ENCODE measurements at regions of chr12 and their contacts with region 1.

Region 1: DNA sequence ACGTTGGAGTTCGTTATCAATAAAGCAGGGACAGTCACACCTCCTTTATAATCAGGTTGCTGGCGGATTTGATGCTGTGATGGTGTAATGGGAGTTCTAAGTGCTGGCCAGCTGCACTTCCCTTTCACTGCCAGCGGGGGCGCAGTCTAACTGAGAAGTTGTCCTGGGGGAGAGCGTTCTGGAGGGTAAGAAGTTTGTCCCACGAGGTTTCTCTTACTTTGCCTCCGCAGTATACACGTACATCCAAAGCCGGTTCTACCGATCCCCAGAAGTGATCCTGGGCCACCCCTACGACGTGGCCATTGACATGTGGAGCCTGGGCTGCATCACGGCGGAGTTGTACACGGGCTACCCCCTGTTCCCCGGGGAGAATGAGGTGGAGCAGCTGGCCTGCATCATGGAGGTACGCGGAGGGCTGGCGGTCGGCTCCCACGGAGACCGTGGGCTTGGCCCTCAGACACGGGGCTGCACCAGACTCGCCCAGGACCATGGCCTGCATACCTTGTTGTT is 42.7 kb downstream of the DYRK4 start:
- DNase-seq: peak; percentile 85
- ATAC-seq: peak; percentile 100
- H3K4me3 ChIP-seq: peak overlapping the region; percentile 81
- H3K27ac ChIP-seq: peak overlapping the region; percentile 65
- H3K4me1 ChIP-seq: peaks cover 3% of the 10 kb centered on the region
- H3K27me3 ChIP-seq: peaks cover 5% of the 10 kb centered on the region
- CTCF ChIP-seq: peak; percentile 88
- POLR2A ChIP-seq: no peak
- RAD21 ChIP-seq: peak; percentile 60

Region 2: GRCh38 chr12:4562034-4562657 is 42.6 kb before region 1 on chr12 and contains the start of gene DYRK4:
- CTCF ChIA-PET with region 1: no interaction called
- POLR2A ChIA-PET with region 1: no interaction called
- dilution Hi-C with region 1: no loop called
- in situ Hi-C with region 1: no loop called
- intact Hi-C with region 1: loop called (anchors 2 kb)
- DNase-seq: peak; percentile 60
- ATAC-seq: peak; percentile 99
- H3K4me3 ChIP-seq: peak within 1 kb of the TSS; percentile 41
- H3K27ac ChIP-seq: no peak within 1 kb of the TSS
- H3K4me1 ChIP-seq: no peaks in the 10 kb centered on the region
- H3K27me3 ChIP-seq: no peaks in the 10 kb centered on the region
- CTCF ChIP-seq: no peak
- POLR2A ChIP-seq: no peak
- RAD21 ChIP-seq: no peak
- total RNA-seq, gene DYRK4: 40.5 and 44.6 TPM in 2 replicates

Region 3: DNA sequence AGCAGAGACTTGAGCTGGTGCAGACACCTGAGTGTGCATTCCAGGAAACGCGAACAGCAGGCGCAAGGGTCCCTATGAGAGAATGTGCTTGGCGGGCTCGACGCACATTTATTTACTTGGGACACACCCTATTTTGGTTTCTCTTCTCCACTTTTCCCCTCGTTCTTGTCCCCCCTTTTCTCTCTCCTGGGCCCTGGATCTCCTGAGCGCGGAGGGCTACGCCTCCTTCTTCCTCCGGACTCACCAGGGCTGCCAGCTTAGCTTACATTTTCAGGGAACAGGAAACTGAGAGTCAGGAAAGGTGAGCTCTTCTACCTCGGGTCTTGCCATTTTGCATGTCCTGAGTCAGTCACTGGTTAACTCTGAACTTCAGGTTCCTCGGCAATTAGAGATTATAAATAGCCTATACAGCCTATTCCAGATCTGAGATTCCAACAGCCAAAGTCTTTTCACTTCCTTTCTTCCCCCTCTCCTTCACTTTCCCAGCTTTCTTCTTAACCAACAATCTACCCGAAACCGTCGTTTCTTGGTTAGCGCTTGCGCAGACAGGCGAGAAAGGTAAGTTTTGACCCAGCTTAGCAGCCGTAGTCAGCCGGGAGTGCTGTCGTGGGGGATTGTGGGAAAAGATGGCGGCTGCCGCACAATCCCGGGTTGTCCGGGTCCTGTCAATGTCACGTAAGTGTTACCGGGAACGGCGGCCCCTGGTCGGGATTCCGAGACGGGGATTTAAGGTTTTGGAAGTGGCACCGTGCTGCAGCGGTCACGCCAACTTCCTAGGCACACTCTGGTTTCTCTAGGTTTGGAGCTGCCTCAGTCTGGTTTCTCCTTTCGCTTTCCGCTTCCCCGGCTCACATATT is 44.0 kb after region 1 on chr12 and contains the starts of genes AKAP3 and NDUFA9:
- CTCF ChIA-PET with region 1: no interaction called
- POLR2A ChIA-PET with region 1: no interaction called
- dilution Hi-C with region 1: no loop called
- in situ Hi-C with region 1: no loop called
- intact Hi-C with region 1: loop called (anchors 2 kb)
- DNase-seq: peak; percentile 83
- ATAC-seq: peak; percentile 99
- H3K4me3 ChIP-seq: peak within 1 kb of the TSS; percentile 93
- H3K27ac ChIP-seq: peak within 1 kb of the TSS; percentile 91
- H3K4me1 ChIP-seq: no peaks in the 10 kb centered on the region
- H3K27me3 ChIP-seq: no peaks in the 10 kb centered on the region
- CTCF ChIP-seq: no peak
- POLR2A ChIP-seq: peak; percentile 71; the same call in 1 of the 2 replicates
- RAD21 ChIP-seq: no peak
- total RNA-seq, gene AKAP3: 0.54 and 0.56 TPM in 2 replicates
- total RNA-seq, gene NDUFA9: 112 and 124 TPM in 2 replicates

Region 4: DNA sequence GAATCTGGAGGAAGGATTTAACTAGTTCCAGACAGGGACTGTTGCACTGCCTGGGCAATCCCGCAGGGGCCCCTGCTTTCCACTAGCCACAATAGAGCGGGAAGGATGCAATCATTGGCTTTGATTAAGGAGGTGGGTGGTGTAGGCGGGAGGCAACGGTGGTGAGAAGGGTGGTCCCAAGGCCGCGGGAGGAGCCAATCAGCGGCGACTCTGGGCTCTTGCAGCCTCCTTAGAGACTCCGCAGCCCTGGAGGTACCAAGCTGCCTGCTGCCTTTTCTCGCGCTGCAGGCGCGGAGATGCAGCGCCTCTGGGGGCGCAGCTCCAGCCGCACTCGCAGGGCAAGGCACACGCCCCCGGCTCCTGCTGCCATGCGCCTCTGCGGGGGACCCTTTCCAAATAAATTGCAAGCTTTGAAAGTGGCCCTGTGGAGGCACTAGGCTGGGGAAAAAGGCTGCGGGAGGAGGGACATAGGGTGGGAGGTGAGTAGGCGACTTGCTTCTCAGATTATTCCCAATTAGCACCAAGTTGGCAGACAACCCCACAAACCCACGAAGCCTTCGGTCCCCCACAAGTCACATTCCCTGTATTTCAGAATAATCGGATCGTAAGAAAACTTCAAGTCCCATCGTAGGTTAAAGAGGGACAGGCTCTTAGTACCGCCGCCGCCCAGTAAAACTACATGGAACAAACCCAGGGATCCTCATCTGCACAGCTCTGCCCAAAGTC is 304.1 kb after region 1 on chr12:
- CTCF ChIA-PET with region 1: no interaction called
- POLR2A ChIA-PET with region 1: no interaction called
- dilution Hi-C with region 1: no loop called
- in situ Hi-C with region 1: no loop called
- intact Hi-C with region 1: no loop called
- DNase-seq: no peak
- ATAC-seq: no peak
- H3K4me3 ChIP-seq: no peak overlapping the region
- H3K27ac ChIP-seq: no peak overlapping the region
- H3K4me1 ChIP-seq: peaks cover 3% of the 10 kb centered on the region; the same call in 1 of the 2 replicates
- H3K27me3 ChIP-seq: peaks cover 46% of the 10 kb centered on the region
- CTCF ChIP-seq: no peak
- POLR2A ChIP-seq: no peak
- RAD21 ChIP-seq: no peak